Activated B cell treated with CpG ODN at 0.5 μM for 24 hours (primary cell): ENCODE measurements at regions of chr16 and their contacts with region 1.

Region 1: DNA sequence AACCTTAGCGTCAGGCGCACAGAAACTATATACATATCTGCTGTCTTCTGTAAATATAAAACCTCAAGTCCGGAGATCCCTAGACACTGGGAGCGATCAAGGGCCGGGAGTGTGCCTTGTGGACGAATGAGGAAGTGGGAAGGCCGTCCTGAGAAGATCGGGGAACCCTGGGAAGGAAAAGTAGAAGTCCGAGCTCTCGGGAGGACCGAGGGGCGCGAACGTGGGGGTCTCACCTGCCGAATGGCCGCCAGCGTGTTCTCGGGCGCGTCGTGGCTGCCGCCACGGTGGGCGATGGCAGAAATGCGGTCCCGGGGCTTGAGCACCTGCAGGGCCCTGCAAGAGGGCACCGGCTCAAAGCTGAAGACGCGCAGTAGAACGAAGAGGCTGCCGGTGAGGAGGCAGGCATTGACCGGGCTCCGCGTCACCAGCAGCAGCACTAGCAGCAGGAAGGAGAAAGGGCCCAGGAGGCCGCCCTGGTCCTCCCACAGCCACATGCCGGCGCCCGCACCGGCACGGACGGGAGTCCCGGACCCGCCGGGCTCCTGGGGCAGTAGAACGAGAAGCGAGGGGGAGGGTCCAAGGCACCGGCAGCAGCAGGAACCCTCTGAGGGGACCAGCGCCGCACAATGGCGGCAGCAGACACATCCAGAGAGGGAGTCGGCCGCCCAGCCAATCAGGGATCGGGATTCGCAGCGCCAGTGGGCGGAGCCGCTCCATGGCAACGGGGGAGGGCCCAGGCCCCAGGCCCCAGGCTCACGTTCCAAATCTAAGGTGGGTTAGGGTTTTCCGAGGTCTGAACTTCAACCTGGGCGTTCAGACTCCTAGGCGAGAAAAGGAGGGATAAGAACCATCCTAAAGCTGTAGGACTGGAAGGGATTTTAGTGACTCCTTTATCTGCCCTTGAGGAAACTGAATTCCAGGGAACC is at the start of gene GDE1:
- DNase-seq: peak; percentile 88
- ATAC-seq: peak; percentile 78
- H3K4me3 Mint-ChIP-seq: peak within 1 kb of the TSS; percentile 95
- H3K27ac Mint-ChIP-seq: peak within 1 kb of the TSS; percentile 89
- H3K4me1 Mint-ChIP-seq: peaks cover 43% of the 10 kb centered on the region
- H3K27me3 Mint-ChIP-seq: no peaks in the 10 kb centered on the region
- CTCF ChIP-seq: no peak
- total RNA-seq, gene GDE1: 17.0 and 18.3 TPM in 2 replicates

Region 2: DNA sequence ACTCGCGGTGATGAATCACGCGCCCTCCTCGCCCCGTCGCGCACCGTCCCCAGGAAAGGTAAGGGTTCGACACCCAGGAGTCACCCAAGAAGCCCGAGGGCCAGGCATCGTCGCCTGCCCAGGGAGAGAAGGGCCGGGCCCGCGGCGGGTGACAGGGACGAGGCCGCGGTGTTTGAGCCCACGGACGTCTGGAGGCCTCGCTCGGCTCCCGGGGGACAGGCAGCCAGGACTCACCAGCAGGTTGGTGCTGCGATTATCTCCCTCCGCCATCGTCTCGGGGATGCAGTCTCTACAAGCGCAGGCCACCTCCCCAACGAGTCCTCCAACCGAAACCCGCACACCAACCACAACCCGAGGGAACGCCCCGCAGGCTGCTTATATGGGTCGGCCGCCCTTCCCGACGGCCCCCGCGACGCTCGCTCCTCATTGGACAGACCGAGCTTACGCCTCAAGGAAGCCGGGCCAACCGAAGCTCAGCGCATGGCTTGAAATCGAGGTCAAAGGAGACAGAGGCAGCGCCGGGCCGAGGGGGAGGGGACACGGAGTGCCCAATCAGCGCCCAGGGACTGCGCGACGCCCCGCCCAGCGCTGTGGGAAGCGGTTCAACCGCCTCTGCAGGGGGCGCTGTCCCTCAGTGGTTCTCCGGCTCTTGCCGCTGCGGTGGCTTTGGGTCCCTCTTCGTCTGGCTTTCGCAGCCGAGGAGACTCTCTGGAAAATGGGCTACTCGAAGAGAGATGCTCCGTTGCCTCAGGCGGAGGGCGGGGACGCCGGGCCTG is 720.3 kb before region 1 on chr16 and contains the start of gene ARL6IP1:
- CTCF ChIA-PET with region 1: no interaction called
- POLR2A ChIA-PET with region 1: interaction called, 6 read pairs
- intact Hi-C with region 1: loop called (anchors 1 kb)
- DNase-seq: peak; percentile 94
- ATAC-seq: peak; percentile 94
- H3K4me3 Mint-ChIP-seq: peak within 1 kb of the TSS; percentile 95
- H3K27ac Mint-ChIP-seq: peak within 1 kb of the TSS; percentile 94
- H3K4me1 Mint-ChIP-seq: peaks cover 35% of the 10 kb centered on the region
- H3K27me3 Mint-ChIP-seq: no peaks in the 10 kb centered on the region
- CTCF ChIP-seq: peak; percentile 37
- total RNA-seq, gene ARL6IP1: 94.0 and 98.3 TPM in 2 replicates

Region 3: GRCh38 chr16:19067349-19068236 is 454.1 kb before region 1 on chr16 and contains the start of gene COQ7:
- CTCF ChIA-PET with region 1: no interaction called
- POLR2A ChIA-PET with region 1: interaction called, 6 read pairs
- intact Hi-C with region 1: loop called (anchors 1 kb)
- DNase-seq: peak; percentile 95
- ATAC-seq: peak; percentile 90
- H3K4me3 Mint-ChIP-seq: peak within 1 kb of the TSS; percentile 93
- H3K27ac Mint-ChIP-seq: peak within 1 kb of the TSS; percentile 97
- H3K4me1 Mint-ChIP-seq: peaks cover 17% of the 10 kb centered on the region
- H3K27me3 Mint-ChIP-seq: peaks cover 4% of the 10 kb centered on the region
- CTCF ChIP-seq: no peak
- total RNA-seq, gene COQ7: 13.6 and 17.5 TPM in 2 replicates

Region 4: GRCh38 chr16:19094541-19095365 is 427.0 kb before region 1 on chr16:
- CTCF ChIA-PET with region 1: no interaction called
- POLR2A ChIA-PET with region 1: interaction called, 12 read pairs
- intact Hi-C with region 1: loop called (anchors 5 kb)
- DNase-seq: no peak
- ATAC-seq: peak; percentile 65
- H3K4me3 Mint-ChIP-seq: no peak overlapping the region
- H3K27ac Mint-ChIP-seq: no peak overlapping the region
- H3K4me1 Mint-ChIP-seq: peaks cover 18% of the 10 kb centered on the region
- H3K27me3 Mint-ChIP-seq: no peaks in the 10 kb centered on the region
- CTCF ChIP-seq: no peak

Region 5: DNA sequence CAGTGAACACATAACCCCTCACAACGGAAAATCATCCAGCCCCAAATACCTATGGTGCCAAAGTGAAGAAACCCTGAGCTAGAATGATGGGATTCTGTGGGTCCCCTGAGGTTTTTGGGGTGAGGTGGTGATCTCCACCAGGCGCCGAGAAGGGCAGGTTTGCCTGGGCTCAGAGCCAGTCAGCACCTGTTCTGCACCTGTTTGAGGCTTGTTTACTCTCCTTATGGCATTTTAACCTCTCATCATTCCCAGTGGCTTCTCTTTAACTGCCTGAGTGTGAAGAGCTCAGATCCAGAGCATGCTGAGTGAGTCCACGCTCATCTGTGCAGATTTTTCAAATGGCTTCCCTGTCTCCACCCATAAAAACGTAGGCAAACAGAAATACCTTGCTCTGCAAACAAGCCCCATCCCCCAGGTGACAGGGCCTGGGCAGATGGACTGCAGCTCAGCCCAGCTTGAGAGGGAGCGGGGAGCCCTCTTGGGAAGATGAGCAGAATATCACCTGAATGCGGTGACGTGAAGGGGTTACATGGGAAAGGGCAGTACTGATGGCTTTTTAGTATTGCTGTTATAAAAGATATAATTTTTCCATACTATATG is 276.3 kb before region 1 on chr16:
- CTCF ChIA-PET with region 1: no interaction called
- POLR2A ChIA-PET with region 1: no interaction called
- intact Hi-C with region 1: no loop called
- DNase-seq: no peak
- ATAC-seq: no peak
- H3K4me3 Mint-ChIP-seq: no peak overlapping the region
- H3K27ac Mint-ChIP-seq: no peak overlapping the region
- H3K4me1 Mint-ChIP-seq: peaks cover 4% of the 10 kb centered on the region
- H3K27me3 Mint-ChIP-seq: no peaks in the 10 kb centered on the region
- CTCF ChIP-seq: no peak

Region 6: GRCh38 chr16:19555162-19555937 is 33.6 kb after region 1 on chr16 and contains the start of gene VPS35L:
- CTCF ChIA-PET with region 1: interaction called, 7 read pairs
- POLR2A ChIA-PET with region 1: interaction called, 52 read pairs
- intact Hi-C with region 1: loop called (anchors 2 kb)
- DNase-seq: peak; percentile 95
- ATAC-seq: peak; percentile 94
- H3K4me3 Mint-ChIP-seq: peak within 1 kb of the TSS; percentile 95
- H3K27ac Mint-ChIP-seq: peak within 1 kb of the TSS; percentile 91
- H3K4me1 Mint-ChIP-seq: peaks cover 26% of the 10 kb centered on the region
- H3K27me3 Mint-ChIP-seq: no peaks in the 10 kb centered on the region
- CTCF ChIP-seq: no peak
- total RNA-seq, gene VPS35L: 59.7 and 66.0 TPM in 2 replicates

Region 7: GRCh38 chr16:19886073-19886941 is 364.6 kb after region 1 on chr16:
- CTCF ChIA-PET with region 1: no interaction called
- POLR2A ChIA-PET with region 1: no interaction called
- intact Hi-C with region 1: loop called (anchors 5 kb)
- DNase-seq: peak; percentile 58
- ATAC-seq: peak; percentile 74
- H3K4me3 Mint-ChIP-seq: peak overlapping the region; percentile 82
- H3K27ac Mint-ChIP-seq: no peak overlapping the region
- H3K4me1 Mint-ChIP-seq: peaks cover 31% of the 10 kb centered on the region
- H3K27me3 Mint-ChIP-seq: peaks cover 35% of the 10 kb centered on the region
- CTCF ChIP-seq: peak; percentile 72